GM12878 (cell line): ENCODE measurements at regions of chr2 and their contacts with region 1.

Region 1: GRCh38 chr2:75640621-75641121 is 5.9 kb upstream of the MRPL19 start:
- DNase-seq: no peak
- ATAC-seq: peak; percentile 99
- H3K4me3 ChIP-seq: no peak overlapping the region
- H3K27ac ChIP-seq: no peak overlapping the region
- H3K4me1 ChIP-seq: no peaks in the 10 kb centered on the region
- H3K27me3 ChIP-seq: no peaks in the 10 kb centered on the region; a peak in 1 of 4 replicates
- CTCF ChIP-seq: peak; percentile 98 to 100 (median 99); a peak in 5 of 6 replicates
- EP300 ChIP-seq: no peak
- POLR2A ChIP-seq: no peak
- RAD21 ChIP-seq: peak; percentile 95

Region 2: DNA sequence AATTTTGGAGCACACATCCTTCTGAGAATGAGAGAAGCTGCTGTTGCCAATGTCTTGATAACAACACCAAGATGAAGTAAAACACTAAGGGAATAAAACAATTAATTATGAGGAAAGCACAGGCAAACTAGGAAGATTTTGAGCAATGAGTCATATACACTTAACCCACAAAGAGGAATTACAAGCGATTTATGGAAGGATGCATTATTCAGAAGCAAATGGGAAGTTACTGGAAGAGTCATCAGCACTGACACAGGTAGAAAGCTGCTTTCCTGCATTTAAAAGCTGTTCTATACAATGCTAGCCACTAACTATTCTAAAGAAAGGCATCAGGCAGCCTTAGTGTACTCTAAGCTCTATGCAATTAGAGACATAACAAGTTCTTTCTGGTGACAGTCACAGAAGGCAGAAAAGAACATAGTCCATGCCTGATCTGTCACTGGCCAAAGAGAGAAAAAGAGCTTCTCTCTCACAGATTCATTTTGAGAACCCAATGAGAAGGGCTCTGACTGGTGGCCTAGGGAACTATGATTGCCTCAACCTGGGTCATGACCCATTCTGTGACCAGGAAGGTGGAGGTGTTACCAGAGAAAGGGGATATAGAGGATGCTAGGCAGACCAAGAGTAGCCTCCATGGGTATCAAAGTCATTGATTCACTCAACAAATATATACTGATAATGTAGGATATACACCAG is 1037.9 kb before region 1 on chr2:
- CTCF ChIA-PET with region 1: no interaction called
- POLR2A ChIA-PET with region 1: no interaction called
- RAD21 ChIA-PET with region 1: no interaction called
- SMC1A ChIA-PET with region 1: no interaction called
- in situ Hi-C with region 1: no loop called
- intact Hi-C with region 1: no loop called
- DNase-seq: no peak
- ATAC-seq: no peak
- H3K4me3 ChIP-seq: no peak overlapping the region
- H3K27ac ChIP-seq: no peak overlapping the region
- H3K4me1 ChIP-seq: no peaks in the 10 kb centered on the region
- H3K27me3 ChIP-seq: no peaks in the 10 kb centered on the region; a peak in 3 of 4 replicates
- CTCF ChIP-seq: no peak
- EP300 ChIP-seq: no peak
- POLR2A ChIP-seq: no peak
- RAD21 ChIP-seq: no peak

Region 3: GRCh38 chr2:75654012-75654411 is 13.3 kb after region 1 on chr2:
- CTCF ChIA-PET with region 1: interaction called, 16 read pairs
- POLR2A ChIA-PET with region 1: interaction called, 7 read pairs
- RAD21 ChIA-PET with region 1: interaction called, 10 read pairs
- SMC1A ChIA-PET with region 1: interaction called, 21 read pairs
- in situ Hi-C with region 1: no loop called
- intact Hi-C with region 1: no loop called
- DNase-seq: no peak
- ATAC-seq: peak; percentile 34; the same call in 1 of the 3 replicates
- H3K4me3 ChIP-seq: no peak overlapping the region
- H3K27ac ChIP-seq: no peak overlapping the region
- H3K4me1 ChIP-seq: no peaks in the 10 kb centered on the region
- H3K27me3 ChIP-seq: no peaks in the 10 kb centered on the region
- CTCF ChIP-seq: 0 out of 6 replicates have a peak, but pooled peaks of 1 of the 3 experiments have one; percentile 7
- EP300 ChIP-seq: no peak
- POLR2A ChIP-seq: no peak
- RAD21 ChIP-seq: no peak

Region 4: DNA sequence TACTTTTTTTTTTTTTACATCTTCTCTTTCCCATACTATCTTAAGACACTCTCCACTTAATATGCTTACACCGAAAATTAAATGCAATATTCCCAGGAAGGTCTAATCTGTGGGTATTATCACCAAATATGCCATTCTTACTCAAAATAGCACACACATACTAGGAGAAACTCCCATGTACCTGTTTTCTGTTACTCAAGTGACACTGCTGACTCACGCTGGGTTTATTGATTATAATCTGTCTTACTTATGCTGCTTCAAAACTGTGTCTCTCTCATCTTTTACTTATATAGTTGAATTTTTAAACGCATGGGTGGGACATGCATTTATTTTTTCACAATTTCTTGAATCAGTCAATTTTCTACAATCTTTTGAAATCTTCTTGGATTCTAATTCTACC is 35.8 kb after region 1 on chr2:
- CTCF ChIA-PET with region 1: interaction called, 150 read pairs
- POLR2A ChIA-PET with region 1: no interaction called
- RAD21 ChIA-PET with region 1: interaction called, 34 read pairs
- SMC1A ChIA-PET with region 1: interaction called, 41 read pairs
- in situ Hi-C with region 1: no loop called
- intact Hi-C with region 1: loop called (anchors 1 kb)
- DNase-seq: no peak
- ATAC-seq: no peak
- H3K4me3 ChIP-seq: no peak overlapping the region
- H3K27ac ChIP-seq: no peak overlapping the region
- H3K4me1 ChIP-seq: peaks cover 7% of the 10 kb centered on the region
- H3K27me3 ChIP-seq: no peaks in the 10 kb centered on the region
- CTCF ChIP-seq: no peak
- EP300 ChIP-seq: no peak
- POLR2A ChIP-seq: no peak
- RAD21 ChIP-seq: no peak

Region 5: GRCh38 chr2:75710577-75711253 is 70.0 kb after region 1 on chr2 and contains the start of gene GCFC2:
- CTCF ChIA-PET with region 1: interaction called, 20 read pairs
- POLR2A ChIA-PET with region 1: interaction called, 3 read pairs
- RAD21 ChIA-PET with region 1: interaction called, 5 read pairs
- SMC1A ChIA-PET with region 1: interaction called, 4 read pairs
- in situ Hi-C with region 1: no loop called
- intact Hi-C with region 1: no loop called
- DNase-seq: peak; percentile 58
- ATAC-seq: peak; percentile 94
- H3K4me3 ChIP-seq: peak within 1 kb of the TSS; percentile 86
- H3K27ac ChIP-seq: peak within 1 kb of the TSS; percentile 94
- H3K4me1 ChIP-seq: peaks cover 14% of the 10 kb centered on the region
- H3K27me3 ChIP-seq: no peaks in the 10 kb centered on the region
- CTCF ChIP-seq: peak; percentile 42 to 59 (median 47); a peak in 5 of 6 replicates
- EP300 ChIP-seq: no peak
- POLR2A ChIP-seq: peak; percentile 96
- RAD21 ChIP-seq: no peak
- polyA plus RNA-seq, gene GCFC2: 15.5 to 27.4 TPM

Region 6: DNA sequence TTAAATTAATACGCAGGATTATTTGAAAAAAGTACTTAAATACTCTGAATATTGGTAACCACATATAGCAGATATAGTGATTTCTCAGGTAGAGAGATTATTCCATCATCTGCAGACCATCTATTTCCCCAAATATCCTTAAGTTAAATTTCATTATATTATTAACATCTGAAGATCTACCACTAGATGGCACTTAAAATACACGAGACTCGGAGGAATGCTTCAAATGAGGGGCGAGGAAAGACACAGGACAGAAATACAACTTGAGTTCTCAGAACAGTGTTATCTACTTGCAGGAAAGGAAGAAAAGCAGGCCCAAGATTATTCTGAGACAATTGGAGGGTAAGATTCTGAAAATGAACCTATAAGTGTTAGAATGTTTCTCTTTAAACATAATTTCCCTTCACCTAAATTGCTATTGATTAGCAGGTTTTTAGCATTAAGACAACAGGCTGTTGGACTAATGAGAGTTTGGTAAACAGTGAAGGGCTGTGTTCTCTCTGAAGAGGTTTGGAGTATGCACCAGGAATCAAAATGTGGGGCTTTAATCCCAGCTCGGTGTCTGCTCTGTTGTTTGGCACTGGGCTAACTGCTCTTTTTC is 147.0 kb after region 1 on chr2:
- CTCF ChIA-PET with region 1: interaction called, 5 read pairs
- POLR2A ChIA-PET with region 1: no interaction called
- RAD21 ChIA-PET with region 1: no interaction called
- SMC1A ChIA-PET with region 1: interaction called, 3 read pairs
- in situ Hi-C with region 1: no loop called
- intact Hi-C with region 1: loop called (anchors 2 kb)
- DNase-seq: no peak
- ATAC-seq: peak; percentile 76
- H3K4me3 ChIP-seq: no peak overlapping the region
- H3K27ac ChIP-seq: no peak overlapping the region
- H3K4me1 ChIP-seq: peaks cover 14% of the 10 kb centered on the region
- H3K27me3 ChIP-seq: no peaks in the 10 kb centered on the region
- CTCF ChIP-seq: peak; percentile 38 to 65 (median 40)
- EP300 ChIP-seq: no peak
- POLR2A ChIP-seq: no peak
- RAD21 ChIP-seq: peak; percentile 91